MCF 10A (cell line): ENCODE measurements at regions of chr18 and their contacts with region 1.

Region 1: GRCh38 chr18:58671111-58671631 is at the start of gene MALT1:
- DNase-seq: peak; percentile 91
- H3K4me3 Mint-ChIP-seq: peak within 1 kb of the TSS; percentile 97
- H3K27ac Mint-ChIP-seq: peak within 1 kb of the TSS; percentile 78
- H3K4me1 Mint-ChIP-seq: peaks cover 55% of the 10 kb centered on the region
- H3K27me3 Mint-ChIP-seq: no peaks in the 10 kb centered on the region
- CTCF ChIP-seq: no peak
- total RNA-seq, gene MALT1: 28.5 and 33.0 TPM in 2 replicates

Region 2: DNA sequence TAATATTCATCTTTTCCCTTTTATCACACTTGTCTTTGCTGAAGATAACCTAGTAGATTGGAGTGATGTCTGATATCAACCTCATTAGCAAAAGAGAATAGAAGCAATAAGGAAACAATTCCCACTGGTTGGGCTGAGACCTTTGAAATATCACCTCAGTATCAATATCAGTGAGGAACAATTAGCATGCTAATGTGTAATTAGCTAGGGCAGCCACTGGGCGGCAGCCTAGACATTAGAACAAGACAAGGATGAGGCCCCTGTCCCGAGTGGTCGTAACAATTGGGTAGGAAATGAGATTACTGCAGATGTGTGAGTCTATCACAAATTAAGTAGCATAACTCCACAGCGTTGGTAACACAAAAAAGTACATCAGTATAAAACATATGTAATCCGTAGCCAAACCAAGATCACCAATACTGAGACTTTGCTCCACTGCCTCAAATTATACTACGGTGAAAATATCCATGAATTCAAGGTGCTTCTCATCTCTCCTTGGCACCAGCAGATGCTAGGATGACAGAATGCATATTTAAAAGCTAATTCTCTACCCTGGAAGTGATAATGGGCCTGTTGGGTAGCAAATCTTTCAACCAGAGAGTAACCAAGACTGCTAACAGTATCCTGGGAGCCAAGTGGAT is 141.3 kb before region 1 on chr18:
- CTCF ChIA-PET with region 1: interaction called, 5 read pairs
- POLR2A ChIA-PET with region 1: interaction called, 6 read pairs
- intact Hi-C with region 1: loop called (anchors 2 kb)
- DNase-seq: peak; percentile 70
- H3K4me3 Mint-ChIP-seq: no peak overlapping the region
- H3K27ac Mint-ChIP-seq: no peak overlapping the region
- H3K4me1 Mint-ChIP-seq: no peaks in the 10 kb centered on the region
- H3K27me3 Mint-ChIP-seq: no peaks in the 10 kb centered on the region
- CTCF ChIP-seq: peak; percentile 91

Region 3: DNA sequence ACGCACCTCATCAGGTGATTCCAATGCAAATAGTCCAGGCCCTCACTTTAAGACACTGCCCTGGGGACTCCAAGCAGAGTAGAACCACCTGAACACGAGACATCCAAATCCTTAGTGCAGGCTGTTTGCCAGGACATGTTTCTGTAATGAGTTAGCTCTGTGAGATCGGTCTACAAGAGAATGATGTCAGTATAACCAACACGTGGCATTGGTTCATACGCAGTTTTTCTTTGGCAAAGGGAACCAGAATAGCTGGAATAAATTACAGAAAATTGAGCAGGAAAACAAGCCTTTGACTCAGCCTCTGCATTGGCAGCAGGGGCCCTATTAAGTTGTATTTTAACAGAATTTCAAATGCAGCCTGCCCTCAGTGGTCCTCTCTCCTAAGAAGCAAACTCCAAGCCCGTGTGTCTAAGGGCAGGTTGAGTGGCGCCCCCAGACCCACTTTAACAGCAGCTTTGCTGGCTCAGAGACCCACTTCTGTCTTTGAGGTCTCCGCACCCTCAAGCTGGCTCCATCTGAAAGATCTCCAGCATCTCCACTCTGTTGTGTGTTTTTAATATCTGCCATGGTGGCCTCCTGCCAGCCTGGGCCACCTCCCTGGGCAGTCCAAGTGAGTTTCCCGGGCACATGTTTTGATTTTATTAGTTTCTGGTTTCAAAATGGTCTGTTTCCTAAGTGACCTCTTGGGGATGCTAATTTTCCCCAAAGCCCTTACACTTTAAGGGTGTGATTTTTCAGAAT is 103.5 kb before region 1 on chr18:
- CTCF ChIA-PET with region 1: interaction called, 3 read pairs
- POLR2A ChIA-PET with region 1: interaction called, 25 read pairs
- intact Hi-C with region 1: no loop called
- DNase-seq: peak; percentile 96
- H3K4me3 Mint-ChIP-seq: no peak overlapping the region
- H3K27ac Mint-ChIP-seq: peak overlapping the region; percentile 91
- H3K4me1 Mint-ChIP-seq: peaks cover 25% of the 10 kb centered on the region
- H3K27me3 Mint-ChIP-seq: no peaks in the 10 kb centered on the region
- CTCF ChIP-seq: no peak

Region 4: GRCh38 chr18:58639751-58640427 is 31.3 kb before region 1 on chr18:
- CTCF ChIA-PET with region 1: interaction called, 5 read pairs
- POLR2A ChIA-PET with region 1: interaction called, 54 read pairs
- intact Hi-C with region 1: no loop called
- DNase-seq: peak; percentile 81
- H3K4me3 Mint-ChIP-seq: peak overlapping the region; percentile 10
- H3K27ac Mint-ChIP-seq: no peak overlapping the region
- H3K4me1 Mint-ChIP-seq: peaks cover 10% of the 10 kb centered on the region
- H3K27me3 Mint-ChIP-seq: no peaks in the 10 kb centered on the region
- CTCF ChIP-seq: no peak

Region 5: DNA sequence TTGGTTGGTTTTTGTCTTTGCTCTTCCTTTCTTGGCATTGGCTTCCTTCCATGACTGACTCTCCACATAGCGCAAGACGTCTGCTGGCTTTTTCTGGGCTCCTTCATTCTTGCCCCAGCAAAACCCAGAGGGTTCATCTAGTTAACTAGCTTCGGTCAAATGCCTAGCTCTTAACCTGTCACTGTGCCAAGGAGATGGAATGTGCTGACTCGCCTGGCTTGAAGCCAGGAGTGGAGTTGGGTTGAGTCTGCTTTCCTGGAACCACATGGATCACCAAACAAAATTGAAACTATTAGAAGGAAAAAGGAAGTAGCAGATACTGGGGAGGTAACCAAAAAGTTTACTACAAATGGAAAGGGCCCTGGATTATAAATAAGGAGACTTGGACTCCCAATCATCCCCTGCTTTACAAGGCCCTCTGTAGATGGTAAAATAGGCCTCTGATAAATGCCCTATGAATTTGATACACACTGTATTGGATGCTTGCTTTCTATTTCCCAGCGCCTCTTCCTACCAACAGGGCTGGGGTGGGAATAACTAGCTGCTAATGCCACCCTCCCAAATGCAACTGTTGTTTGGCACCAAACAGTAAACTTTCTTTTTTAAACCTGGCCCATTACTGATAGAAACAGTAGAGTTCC is 11.4 kb after region 1 on chr18:
- CTCF ChIA-PET with region 1: interaction called, 5 read pairs
- POLR2A ChIA-PET with region 1: interaction called, 75 read pairs
- intact Hi-C with region 1: no loop called
- DNase-seq: peak; percentile 94
- H3K4me3 Mint-ChIP-seq: peak overlapping the region; percentile 1
- H3K27ac Mint-ChIP-seq: peak overlapping the region; percentile 60
- H3K4me1 Mint-ChIP-seq: peaks cover 28% of the 10 kb centered on the region
- H3K27me3 Mint-ChIP-seq: no peaks in the 10 kb centered on the region
- CTCF ChIP-seq: no peak

Region 6: GRCh38 chr18:58761241-58761969 is 90.2 kb after region 1 on chr18:
- CTCF ChIA-PET with region 1: interaction called, 19 read pairs
- POLR2A ChIA-PET with region 1: interaction called, 3 read pairs
- intact Hi-C with region 1: loop called (anchors 5 kb)
- DNase-seq: no peak
- H3K4me3 Mint-ChIP-seq: no peak overlapping the region
- H3K27ac Mint-ChIP-seq: no peak overlapping the region
- H3K4me1 Mint-ChIP-seq: no peaks in the 10 kb centered on the region
- H3K27me3 Mint-ChIP-seq: peaks cover 20% of the 10 kb centered on the region
- CTCF ChIP-seq: no peak

Region 7: GRCh38 chr18:58896268-58896667 is 225.1 kb after region 1 on chr18:
- CTCF ChIA-PET with region 1: no interaction called
- POLR2A ChIA-PET with region 1: no interaction called
- intact Hi-C with region 1: no loop called
- DNase-seq: no peak
- H3K4me3 Mint-ChIP-seq: no peak overlapping the region
- H3K27ac Mint-ChIP-seq: no peak overlapping the region
- H3K4me1 Mint-ChIP-seq: peaks cover 13% of the 10 kb centered on the region
- H3K27me3 Mint-ChIP-seq: no peaks in the 10 kb centered on the region
- CTCF ChIP-seq: no peak